K562 (cell line): ENCODE measurements at regions of chr13 and their contacts with region 1.

Region 1: DNA sequence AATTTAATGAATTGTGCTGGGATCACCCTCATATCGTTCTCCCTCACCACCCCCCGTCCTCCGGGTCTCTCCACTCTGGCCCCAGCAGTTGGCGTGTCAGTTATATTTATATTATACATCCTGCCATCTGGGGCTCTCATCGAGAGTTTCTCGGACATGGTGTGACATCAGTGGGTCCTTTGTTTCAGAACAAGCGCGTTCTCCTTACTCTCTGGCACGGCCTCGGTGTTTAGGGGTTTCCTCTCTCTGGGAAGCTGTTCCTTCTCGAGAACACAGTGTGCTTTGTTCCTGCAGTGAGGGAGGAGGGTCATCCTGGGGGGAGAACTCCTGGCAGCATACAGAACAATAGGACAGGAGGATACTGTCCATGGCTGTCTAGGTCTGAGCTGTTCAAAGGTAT is 9.8 kb upstream of the MCF2L start:
- DNase-seq: no peak
- ATAC-seq: no peak
- H3K4me3 ChIP-seq: no peak overlapping the region
- H3K27ac ChIP-seq: no peak overlapping the region
- H3K4me1 ChIP-seq: no peaks in the 10 kb centered on the region
- H3K27me3 ChIP-seq: peaks cover 14 to 76% of the 10 kb centered on the region in 2 experiments; a peak in 3 of 5 replicates
- CTCF ChIP-seq: no peak
- EP300 ChIP-seq: no peak
- POLR2A ChIP-seq: no peak
- RAD21 ChIP-seq: no peak

Region 2: DNA sequence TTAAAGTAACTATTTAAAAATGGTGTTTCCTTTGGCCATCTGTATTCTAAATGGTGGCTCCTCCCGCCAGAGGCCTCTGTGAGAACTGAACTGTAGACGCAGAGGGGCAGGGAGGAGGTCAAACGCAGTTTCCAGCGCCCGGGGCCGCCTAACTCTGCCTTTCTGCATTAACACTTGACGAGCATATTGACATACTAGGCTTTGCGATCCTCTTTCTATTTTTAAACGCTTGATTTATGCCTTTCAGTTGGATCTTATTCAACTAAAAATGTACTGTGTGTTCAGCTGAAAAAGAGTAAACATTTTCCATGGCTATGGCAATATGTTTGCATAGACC is 508.3 kb before region 1 on chr13:
- CTCF ChIA-PET with region 1: no interaction called
- POLR2A ChIA-PET with region 1: no interaction called
- in situ Hi-C with region 1: no loop called
- intact Hi-C with region 1: no loop called
- DNase-seq: no peak
- ATAC-seq: no peak
- H3K4me3 ChIP-seq: no peak overlapping the region
- H3K27ac ChIP-seq: no peak overlapping the region
- H3K4me1 ChIP-seq: no peaks in the 10 kb centered on the region
- H3K27me3 ChIP-seq: peaks cover 30 to 75% of the 10 kb centered on the region in 2 experiments; a peak in 4 of 5 replicates
- CTCF ChIP-seq: no peak
- EP300 ChIP-seq: no peak
- POLR2A ChIP-seq: no peak
- RAD21 ChIP-seq: no peak

Region 3: GRCh38 chr13:113001241-113002140 is 42.3 kb after region 1 on chr13:
- CTCF ChIA-PET with region 1: no interaction called
- POLR2A ChIA-PET with region 1: no interaction called
- in situ Hi-C with region 1: no loop called
- intact Hi-C with region 1: loop called (anchors 10 kb)
- DNase-seq: no peak
- ATAC-seq: no peak; the same call in 2 of the 3 replicates
- H3K4me3 ChIP-seq: no peak overlapping the region
- H3K27ac ChIP-seq: no peak overlapping the region
- H3K4me1 ChIP-seq: peaks cover 0 to 3% of the 10 kb centered on the region in 2 experiments; a peak in 2 of 5 replicates
- H3K27me3 ChIP-seq: peaks cover 8 to 74% of the 10 kb centered on the region in 2 experiments; a peak in 4 of 5 replicates
- CTCF ChIP-seq: no peak
- EP300 ChIP-seq: no peak
- POLR2A ChIP-seq: no peak
- RAD21 ChIP-seq: no peak